ENCODE measurements at regions of chr17 and their contacts with region 1.

Region 1: DNA sequence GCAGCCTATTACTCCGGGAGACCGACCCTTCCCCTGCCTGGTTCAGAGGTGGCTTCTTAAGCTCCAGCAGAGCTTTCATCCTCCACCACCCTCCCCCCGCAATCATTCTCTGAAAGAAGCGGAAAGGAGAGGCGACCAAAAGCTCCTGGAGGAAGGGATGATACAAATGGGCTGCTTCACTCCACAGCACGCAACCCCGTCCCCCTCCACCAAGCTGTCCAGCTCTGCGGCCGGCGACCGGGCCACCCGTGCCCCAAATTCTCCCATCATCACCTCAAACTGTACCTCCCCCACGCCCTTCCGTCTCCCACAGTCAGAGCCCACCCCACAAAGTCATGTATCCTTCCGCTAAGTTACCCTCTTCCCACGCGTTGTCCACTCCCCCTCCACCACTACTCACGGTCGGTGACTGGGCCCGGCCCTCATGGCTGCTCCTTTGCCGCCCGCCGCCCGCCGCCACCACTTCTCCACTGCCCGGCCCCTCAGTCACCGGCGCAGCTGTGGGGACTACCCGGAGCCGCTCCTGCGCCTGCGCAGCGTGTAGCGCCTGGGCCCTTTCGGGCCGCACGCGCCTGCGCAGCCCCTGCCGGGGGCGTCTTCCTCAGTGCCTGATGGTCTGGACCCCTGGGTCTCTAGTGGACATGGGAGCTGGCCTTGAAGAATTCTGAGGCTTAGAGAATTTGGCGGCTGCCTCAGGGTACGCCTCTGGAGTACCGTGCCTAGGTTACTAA is at the start of gene FAM222B:
- DNase-seq: peak; percentile 85
- H3K4me3 Mint-ChIP-seq: peak within 1 kb of the TSS; percentile 97
- H3K27ac Mint-ChIP-seq: peak within 1 kb of the TSS; percentile 95
- H3K4me1 Mint-ChIP-seq: peaks cover 24% of the 10 kb centered on the region
- H3K27me3 Mint-ChIP-seq: no peaks in the 10 kb centered on the region
- total RNA-seq, gene FAM222B: 27.5 and 28.1 TPM in 2 replicates

Region 2: DNA sequence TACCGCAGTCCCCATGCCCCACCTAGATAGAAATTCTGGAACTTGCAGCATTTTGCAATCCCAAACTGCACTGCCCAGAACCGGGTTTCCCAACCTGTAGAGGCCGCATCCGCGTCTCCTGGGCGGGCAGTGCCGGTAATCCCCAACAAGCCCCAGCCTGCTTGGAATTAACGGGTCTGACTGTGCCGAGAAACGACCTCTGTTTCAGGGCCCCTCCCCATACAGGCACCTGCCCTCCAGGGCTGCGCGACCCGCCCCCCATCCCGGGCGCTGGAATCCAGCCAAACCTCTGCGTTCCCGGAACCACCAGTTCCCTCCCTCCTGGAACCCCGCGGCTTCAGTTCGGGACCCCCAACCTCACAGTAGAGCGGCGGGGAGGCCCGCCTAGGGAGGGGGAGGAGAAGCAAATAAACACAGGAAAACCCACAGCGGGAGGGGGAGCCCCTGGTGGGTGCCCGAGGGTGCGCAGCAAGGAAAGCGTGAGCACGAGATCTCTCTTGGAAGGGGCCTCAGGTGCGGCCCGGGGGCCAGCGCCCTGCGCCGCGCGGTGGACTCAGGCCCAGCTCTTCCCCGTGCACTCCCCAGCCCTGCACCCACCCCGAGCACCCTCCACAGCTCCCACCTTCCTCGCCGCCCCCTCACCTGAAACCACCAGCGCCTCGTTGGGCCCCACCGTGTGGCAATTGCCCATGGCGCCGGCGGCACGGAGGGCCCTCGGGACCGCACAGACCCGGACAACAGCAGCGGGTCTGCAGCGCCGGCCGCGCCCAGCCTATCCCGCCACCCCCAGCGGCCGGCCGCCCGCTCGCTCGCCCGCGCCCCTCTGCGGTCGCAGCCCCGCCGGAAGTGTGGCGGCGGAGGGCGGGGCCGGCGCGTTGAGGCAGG is 54.7 kb after region 1 on chr17 and contains the start of gene FLOT2:
- intact Hi-C with region 1: loop called (anchors 1 kb)
- DNase-seq: peak; percentile 50
- H3K4me3 Mint-ChIP-seq: peak within 1 kb of the TSS; percentile 95
- H3K27ac Mint-ChIP-seq: peak within 1 kb of the TSS; percentile 96
- H3K4me1 Mint-ChIP-seq: peaks cover 68% of the 10 kb centered on the region
- H3K27me3 Mint-ChIP-seq: no peaks in the 10 kb centered on the region
- total RNA-seq, gene FLOT2: 92.2 and 98.8 TPM in 2 replicates

Measured in activated T-helper 1 cell treated with anti-CD3 and anti-CD28 coated beads, Interleukin-12 subunit alpha, Interleukin-12 subunit beta, Interleukin-2, Interleukin-4 antibody, amounts not matched to agents 30 ng/mL and 10 ng/mL and 1 ng/mL, durations not matched to agents 14 hours and 24 hours and 36 hours (primary cell).